SK-N-SH (cell line): ENCODE measurements at regions of chr11 and their contacts with region 1.

Region 1: DNA sequence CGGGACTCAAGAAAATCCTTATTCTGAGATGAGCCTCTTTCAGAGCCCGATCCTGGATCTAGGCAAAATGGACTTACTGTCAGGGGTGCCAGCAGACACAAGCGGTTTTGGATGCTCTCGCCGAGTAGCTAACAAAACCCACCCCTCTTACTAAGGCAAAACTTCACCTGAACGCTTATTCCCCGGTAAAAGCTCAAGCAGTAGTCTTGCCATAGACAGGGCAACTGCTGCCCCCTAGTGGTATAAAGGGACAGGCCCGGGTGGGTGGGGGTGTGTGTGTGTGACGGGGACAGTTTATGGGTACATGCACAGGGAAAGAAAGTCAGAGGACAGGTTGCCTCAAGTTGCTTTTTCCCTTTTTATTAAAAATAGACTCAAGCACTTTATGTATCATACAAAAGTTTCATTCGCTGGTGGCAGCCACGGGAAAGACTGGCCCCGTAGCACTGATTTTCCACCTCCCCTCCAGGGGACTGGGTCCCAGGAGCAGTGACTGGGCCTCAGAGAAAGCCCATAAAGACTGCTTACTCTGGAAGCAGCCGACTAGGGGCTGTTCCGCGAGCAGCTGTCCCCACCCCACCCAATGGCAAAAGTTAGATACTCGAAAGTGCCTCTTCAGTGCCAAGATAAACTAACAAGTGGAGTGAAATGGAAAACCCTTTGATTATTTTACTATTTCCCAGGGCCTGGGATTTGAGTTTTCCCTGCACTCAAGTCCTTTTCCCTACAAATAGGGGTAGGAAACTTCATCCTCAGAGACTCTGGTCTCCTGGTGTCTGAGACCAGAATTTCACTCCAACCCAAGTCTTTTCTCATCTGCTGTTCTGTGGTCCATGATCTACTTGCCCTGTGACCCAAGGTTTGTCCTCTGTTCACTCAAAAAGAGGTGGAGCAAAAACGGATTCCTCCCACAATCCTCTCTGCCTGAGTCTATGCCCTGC is 4.7 kb downstream of the YPEL4 start:
- DNase-seq: peak; percentile 87
- H3K4me3 ChIP-seq: peak overlapping the region in 1 of 2 experiments; percentile 36; a peak in 1 of 4 replicates
- H3K27ac ChIP-seq: no peak overlapping the region
- H3K4me1 ChIP-seq: peaks cover 27 to 30% of the 10 kb centered on the region in 2 experiments; a peak in 3 of 4 replicates
- H3K27me3 ChIP-seq: no peaks in the 10 kb centered on the region
- CTCF ChIP-seq: peak; percentile 87
- EP300 ChIP-seq: no peak
- RAD21 ChIP-seq: peak; percentile 78

Region 2: GRCh38 chr11:57345555-57346211 is 299.3 kb before region 1 on chr11:
- CTCF ChIA-PET with region 1: interaction called, 12 read pairs
- POLR2A ChIA-PET with region 1: no interaction called
- DNase-seq: peak; percentile 86
- H3K4me3 ChIP-seq: no peak overlapping the region; a peak in 1 of 4 replicates
- H3K27ac ChIP-seq: no peak overlapping the region; a peak in 1 of 4 replicates
- H3K4me1 ChIP-seq: peaks cover 0 to 2% of the 10 kb centered on the region in 2 experiments; a peak in 1 of 4 replicates
- H3K27me3 ChIP-seq: no peaks in the 10 kb centered on the region
- CTCF ChIP-seq: peak; percentile 68
- EP300 ChIP-seq: no peak
- RAD21 ChIP-seq: peak; percentile 75

Region 3: DNA sequence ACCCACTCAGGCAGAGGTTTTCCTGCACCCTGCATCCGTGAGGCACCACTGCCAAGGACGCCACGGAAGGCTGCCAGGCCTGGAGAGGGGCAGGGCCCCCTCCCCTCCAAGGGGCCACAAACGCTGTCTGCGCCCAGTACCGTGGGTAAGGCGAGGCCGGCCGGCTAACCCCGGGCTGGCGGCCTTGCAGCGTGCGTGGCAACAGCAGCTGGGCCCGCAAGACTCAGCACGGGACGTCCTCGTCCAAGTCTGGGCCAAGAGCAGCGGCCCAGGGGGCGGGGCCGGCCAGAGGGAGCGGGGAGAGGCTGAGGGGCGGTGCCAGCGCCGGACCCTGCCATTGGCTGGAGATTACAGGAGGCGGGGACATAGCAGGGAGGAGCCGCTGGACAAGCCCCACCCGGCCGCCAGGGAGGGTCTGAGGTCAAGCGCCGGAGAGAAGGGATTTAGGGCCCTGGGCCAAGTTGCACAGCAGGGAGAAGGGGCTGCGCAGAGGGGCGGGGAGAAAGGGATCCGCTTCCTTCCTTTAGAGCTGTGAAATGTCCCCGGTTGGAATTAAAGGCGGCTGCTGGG is 145.5 kb before region 1 on chr11:
- CTCF ChIA-PET with region 1: interaction called, 24 read pairs
- POLR2A ChIA-PET with region 1: no interaction called
- DNase-seq: peak; percentile 100
- H3K4me3 ChIP-seq: peak overlapping the region; percentile 30 to 36; a peak in 3 of 4 replicates
- H3K27ac ChIP-seq: peak overlapping the region in 1 of 2 experiments; percentile 51; a peak in 1 of 4 replicates
- H3K4me1 ChIP-seq: peaks cover 11 to 12% of the 10 kb centered on the region in 2 experiments; a peak in 2 of 4 replicates
- H3K27me3 ChIP-seq: no peaks in the 10 kb centered on the region
- CTCF ChIP-seq: no peak
- EP300 ChIP-seq: no peak
- RAD21 ChIP-seq: no peak

Region 4: GRCh38 chr11:57597916-57598830 is 46.8 kb before region 1 on chr11:
- CTCF ChIA-PET with region 1: interaction called, 13 read pairs
- POLR2A ChIA-PET with region 1: no interaction called
- DNase-seq: peak; percentile 90
- H3K4me3 ChIP-seq: peak overlapping the region in 1 of 2 experiments; percentile 41; a peak in 2 of 4 replicates
- H3K27ac ChIP-seq: peak overlapping the region in 1 of 2 experiments; percentile 11; a peak in 1 of 4 replicates
- H3K4me1 ChIP-seq: peaks cover 0 to 11% of the 10 kb centered on the region in 2 experiments; a peak in 1 of 4 replicates
- H3K27me3 ChIP-seq: 0 out of 2 replicates have a peak, but pooled peaks cover 8% of the 10 kb centered on the region
- CTCF ChIP-seq: no peak
- EP300 ChIP-seq: no peak
- RAD21 ChIP-seq: no peak

Region 5: DNA sequence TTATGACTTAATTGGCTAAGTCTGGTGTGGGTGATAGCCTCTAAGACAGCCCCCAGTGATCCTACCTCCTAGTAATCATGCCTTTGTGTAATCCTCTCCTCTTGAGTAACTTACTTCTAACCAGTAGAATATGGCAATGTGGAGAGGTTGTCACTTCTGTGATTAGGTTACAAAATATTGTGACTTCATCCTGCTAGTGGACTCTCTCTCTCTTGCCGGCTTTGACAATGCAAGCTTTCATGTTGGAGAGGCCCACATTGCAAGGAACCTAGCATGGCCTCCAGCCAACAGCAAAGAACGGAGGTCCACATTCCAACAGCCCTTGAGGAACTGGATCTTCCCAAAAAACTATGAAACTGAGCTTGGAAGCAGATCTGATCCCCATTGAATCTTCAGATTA is 14.8 kb before region 1 on chr11:
- CTCF ChIA-PET with region 1: interaction called, 21 read pairs
- POLR2A ChIA-PET with region 1: interaction called, 3 read pairs
- DNase-seq: no peak
- H3K4me3 ChIP-seq: no peak overlapping the region
- H3K27ac ChIP-seq: no peak overlapping the region
- H3K4me1 ChIP-seq: no peaks in the 10 kb centered on the region
- H3K27me3 ChIP-seq: peaks cover 6% of the 10 kb centered on the region; the same call in 1 of the 2 replicates
- CTCF ChIP-seq: no peak
- EP300 ChIP-seq: no peak
- RAD21 ChIP-seq: no peak

Region 6: DNA sequence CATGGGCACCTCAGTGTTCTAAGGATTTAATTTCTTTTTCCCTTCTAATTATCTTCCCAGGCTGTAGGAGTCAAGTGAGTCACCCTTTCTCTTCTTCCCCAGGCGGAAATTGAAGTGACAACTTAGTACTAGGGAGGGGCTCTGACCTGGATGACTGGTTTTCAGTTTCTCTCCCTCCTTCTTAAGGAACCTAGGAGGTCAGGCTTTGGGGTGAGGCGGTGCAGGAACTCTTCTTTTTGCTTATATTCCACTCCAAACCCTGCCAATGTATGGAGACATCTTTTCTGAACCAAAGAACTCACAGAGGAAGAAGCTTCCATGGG is 35.5 kb after region 1 on chr11:
- CTCF ChIA-PET with region 1: no interaction called
- POLR2A ChIA-PET with region 1: no interaction called
- DNase-seq: no peak
- H3K4me3 ChIP-seq: no peak overlapping the region
- H3K27ac ChIP-seq: no peak overlapping the region
- H3K4me1 ChIP-seq: no peaks in the 10 kb centered on the region; a peak in 1 of 4 replicates
- H3K27me3 ChIP-seq: no peaks in the 10 kb centered on the region
- CTCF ChIP-seq: no peak
- EP300 ChIP-seq: no peak
- RAD21 ChIP-seq: no peak